Activated T-helper 1 cell treated with anti-CD3 and anti-CD28 coated beads, Interleukin-12 subunit alpha, Interleukin-12 subunit beta, Interleukin-2, Interleukin-4 antibody, amounts not matched to agents 30 ng/mL and 10 ng/mL and 1 ng/mL, durations not matched to agents 14 hours and 24 hours and 36 hours (primary cell): ENCODE measurements at regions of chr2 and their contacts with region 1.

Region 1: DNA sequence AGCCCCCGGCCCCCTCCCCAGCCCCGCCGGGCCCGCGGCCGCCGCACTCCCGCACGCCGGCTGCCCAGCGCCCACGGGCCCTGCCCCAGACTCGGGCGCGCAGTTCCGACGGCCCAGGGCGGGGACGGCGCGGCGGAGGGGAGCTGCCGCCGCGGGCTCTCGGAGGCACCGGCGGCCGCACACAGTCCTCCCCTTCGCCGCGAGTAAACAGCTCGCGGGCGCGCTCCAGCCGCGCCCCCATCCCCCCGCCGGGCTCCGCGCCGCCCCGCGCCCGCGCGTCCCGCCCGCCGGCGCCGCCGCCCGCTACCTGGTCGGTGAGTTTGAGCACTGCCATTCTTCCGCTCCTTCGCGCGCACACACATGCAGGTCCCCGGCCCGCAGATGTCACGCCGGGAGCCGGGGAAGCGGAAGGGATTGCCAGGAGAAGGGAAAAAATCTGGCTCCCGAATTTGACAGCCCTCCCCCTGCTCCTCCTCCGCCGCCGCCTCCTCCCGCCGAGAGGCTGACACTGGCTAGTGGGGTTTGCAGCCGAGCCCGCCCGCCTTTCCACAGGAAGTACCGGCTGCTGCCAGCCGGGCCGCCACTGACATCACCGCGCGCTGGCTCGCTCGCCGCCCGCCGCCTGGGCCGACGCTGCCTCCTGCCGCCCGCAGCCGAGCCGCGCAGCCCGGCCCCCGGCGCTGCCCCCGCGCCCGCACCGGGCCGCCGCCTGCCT is at the start of gene ANKRD44:
- DNase-seq: peak; percentile 87
- H3K4me3 Mint-ChIP-seq: peak within 1 kb of the TSS; percentile 91
- H3K27ac Mint-ChIP-seq: peak within 1 kb of the TSS; percentile 98
- H3K4me1 Mint-ChIP-seq: peaks cover 68% of the 10 kb centered on the region
- H3K27me3 Mint-ChIP-seq: no peaks in the 10 kb centered on the region
- total RNA-seq, gene ANKRD44: 153 and 159 TPM in 2 replicates

Region 2: GRCh38 chr2:196486146-196486545 is 824.3 kb before region 1 on chr2:
- intact Hi-C with region 1: no loop called
- DNase-seq: no peak
- H3K4me3 Mint-ChIP-seq: no peak overlapping the region
- H3K27ac Mint-ChIP-seq: no peak overlapping the region
- H3K4me1 Mint-ChIP-seq: no peaks in the 10 kb centered on the region
- H3K27me3 Mint-ChIP-seq: peaks cover 34% of the 10 kb centered on the region

Region 3: GRCh38 chr2:197011799-197012641 is 298.4 kb before region 1 on chr2:
- intact Hi-C with region 1: loop called (anchors 1 kb)
- DNase-seq: no peak
- H3K4me3 Mint-ChIP-seq: no peak overlapping the region
- H3K27ac Mint-ChIP-seq: peak overlapping the region; percentile 74
- H3K4me1 Mint-ChIP-seq: peaks cover 6% of the 10 kb centered on the region
- H3K27me3 Mint-ChIP-seq: peaks cover 2% of the 10 kb centered on the region

Region 4: DNA sequence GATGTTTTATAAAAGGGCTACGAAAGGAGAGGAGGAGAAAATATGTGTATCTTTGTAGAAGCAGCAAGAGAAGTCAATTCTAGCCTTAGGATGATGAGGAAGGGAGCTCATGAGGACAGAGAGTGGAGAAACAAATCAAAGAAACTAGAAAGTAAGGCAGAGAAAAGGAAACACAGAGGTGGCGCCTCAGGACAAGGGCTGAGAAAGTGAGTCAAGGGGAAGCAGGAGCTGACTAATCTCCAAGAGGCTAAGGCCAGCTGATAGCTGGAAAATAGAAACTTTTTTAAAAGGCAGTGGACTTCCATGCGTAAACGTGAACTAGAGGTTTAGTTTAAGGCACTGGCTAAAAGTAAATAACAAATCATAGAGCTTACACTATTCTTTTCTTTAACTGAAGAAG is 173.2 kb before region 1 on chr2:
- intact Hi-C with region 1: no loop called
- DNase-seq: no peak
- H3K4me3 Mint-ChIP-seq: peak overlapping the region; percentile 8
- H3K27ac Mint-ChIP-seq: peak overlapping the region; percentile 66
- H3K4me1 Mint-ChIP-seq: peaks cover 87% of the 10 kb centered on the region
- H3K27me3 Mint-ChIP-seq: no peaks in the 10 kb centered on the region

Region 5: GRCh38 chr2:197191177-197191939 is 119.1 kb before region 1 on chr2:
- intact Hi-C with region 1: loop called (anchors 1 kb)
- DNase-seq: no peak
- H3K4me3 Mint-ChIP-seq: peak overlapping the region; percentile 0
- H3K27ac Mint-ChIP-seq: peak overlapping the region; percentile 47
- H3K4me1 Mint-ChIP-seq: peaks cover 83% of the 10 kb centered on the region
- H3K27me3 Mint-ChIP-seq: no peaks in the 10 kb centered on the region

Region 6: DNA sequence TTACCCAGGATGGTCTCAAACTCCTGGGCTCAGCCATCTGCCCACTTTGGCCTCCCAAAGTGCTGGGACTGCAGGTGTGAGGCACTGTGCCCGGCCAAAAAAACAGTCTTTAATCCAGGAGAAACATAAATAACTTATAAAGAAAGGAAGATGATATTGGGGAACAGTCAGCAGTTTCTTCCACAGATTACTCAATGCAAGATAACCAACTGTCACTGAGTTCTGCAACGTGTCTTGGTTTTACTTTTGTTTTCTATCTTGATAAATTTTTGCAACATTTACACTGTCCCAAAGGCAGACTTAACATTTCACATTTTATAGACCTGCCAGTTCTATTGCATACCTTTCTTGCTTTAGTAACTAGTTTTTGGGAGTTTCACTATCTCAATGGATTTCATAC is 71.0 kb before region 1 on chr2:
- intact Hi-C with region 1: loop called (anchors 1 kb)
- DNase-seq: no peak
- H3K4me3 Mint-ChIP-seq: peak overlapping the region; percentile 80
- H3K27ac Mint-ChIP-seq: peak overlapping the region; percentile 94
- H3K4me1 Mint-ChIP-seq: peaks cover 82% of the 10 kb centered on the region
- H3K27me3 Mint-ChIP-seq: no peaks in the 10 kb centered on the region

Region 7: GRCh38 chr2:197293252-197294007 is 17.0 kb before region 1 on chr2:
- intact Hi-C with region 1: loop called (anchors 1 kb)
- DNase-seq: no peak
- H3K4me3 Mint-ChIP-seq: peak overlapping the region; percentile 68
- H3K27ac Mint-ChIP-seq: peak overlapping the region; percentile 89
- H3K4me1 Mint-ChIP-seq: peaks cover 88% of the 10 kb centered on the region
- H3K27me3 Mint-ChIP-seq: no peaks in the 10 kb centered on the region

Region 8: DNA sequence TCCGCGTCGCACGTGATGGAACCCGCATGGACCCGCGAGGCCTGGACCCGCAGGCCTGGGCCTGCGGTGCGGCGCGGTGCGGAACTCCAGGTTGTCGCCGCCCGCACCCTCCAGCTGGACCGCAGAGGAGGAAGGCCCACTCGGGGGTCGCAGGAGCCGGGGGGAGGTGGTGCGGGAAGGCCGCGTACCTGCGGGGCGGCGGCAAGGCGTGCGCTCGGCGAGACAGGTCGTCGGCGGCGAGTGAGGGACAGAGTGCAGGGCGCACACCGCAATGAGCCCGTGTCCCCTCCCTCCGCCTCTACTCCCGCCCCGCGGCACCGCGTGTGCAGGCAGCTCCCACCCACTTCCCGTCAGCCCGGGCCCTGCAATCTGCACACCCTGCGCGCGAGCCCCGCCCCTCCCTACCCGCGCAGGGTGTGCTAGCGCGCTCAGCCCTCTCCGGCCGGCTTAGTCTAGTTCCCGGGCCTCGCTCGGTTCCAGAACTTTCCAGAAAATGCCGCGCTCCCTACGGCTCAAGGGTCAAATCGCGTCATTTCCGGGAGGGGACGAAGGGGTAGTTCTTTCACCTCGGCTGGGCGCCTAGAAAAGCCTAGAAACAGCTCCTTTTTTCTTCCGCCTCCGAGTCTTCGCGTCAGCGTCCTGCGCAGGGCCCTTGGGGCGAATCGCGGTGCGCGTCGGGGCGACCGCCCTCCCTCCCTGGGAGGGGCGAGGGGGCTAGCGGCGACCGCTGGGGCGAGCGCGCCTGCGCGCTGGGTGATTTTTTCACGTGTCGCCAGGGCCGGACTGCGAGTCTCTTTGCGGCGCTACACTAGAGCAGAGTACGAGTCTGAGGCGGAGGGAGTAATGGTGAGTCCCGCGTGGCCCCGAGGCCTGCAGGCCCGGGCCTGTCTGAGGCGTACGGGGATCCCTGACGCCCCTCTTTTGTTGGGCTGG is 189.4 kb after region 1 on chr2 and contains the starts of genes HSPD1 and HSPE1:
- intact Hi-C with region 1: loop called (anchors 5 kb)
- DNase-seq: peak; percentile 98
- H3K4me3 Mint-ChIP-seq: peak within 1 kb of the TSS; percentile 100
- H3K27ac Mint-ChIP-seq: peak within 1 kb of the TSS; percentile 99
- H3K4me1 Mint-ChIP-seq: peaks cover 50% of the 10 kb centered on the region
- H3K27me3 Mint-ChIP-seq: no peaks in the 10 kb centered on the region
- total RNA-seq, gene HSPD1: 811 and 821 TPM in 2 replicates
- total RNA-seq, gene HSPE1: 325 and 343 TPM in 2 replicates